Common myeloid progenitor, CD34-positive (primary cell): ENCODE measurements at regions of chr1 and their contacts with region 1.

Region 1: GRCh38 chr1:110495926-110496600 is 22.9 kb downstream of the KCNA10 start:
- DNase-seq: peak; percentile 81 to 90 (median 85)
- H3K4me3 ChIP-seq: no peak overlapping the region
- H3K27ac ChIP-seq: no peak overlapping the region
- H3K4me1 ChIP-seq: peaks cover 3 to 28% (median 23%) of the 10 kb centered on the region in 4 experiments
- H3K27me3 ChIP-seq: no peaks in the 10 kb centered on the region

Region 2: GRCh38 chr1:110384581-110385321 is 111.3 kb before region 1 on chr1:
- CTCF ChIA-PET with region 1: no interaction called
- POLR2A ChIA-PET with region 1: no interaction called
- DNase-seq: peak; percentile 14 to 57 (median 39)
- H3K4me3 ChIP-seq: no peak overlapping the region
- H3K27ac ChIP-seq: peak overlapping the region in 1 of 2 experiments; percentile 47
- H3K4me1 ChIP-seq: peaks cover 14 to 19% (median 15%) of the 10 kb centered on the region in 4 experiments
- H3K27me3 ChIP-seq: no peaks in the 10 kb centered on the region

Region 3: GRCh38 chr1:110407260-110408210 is 88.5 kb before region 1 on chr1 and contains the start of gene LAMTOR5:
- CTCF ChIA-PET with region 1: interaction called, 107 read pairs
- POLR2A ChIA-PET with region 1: interaction called, 3 read pairs
- DNase-seq: peak; percentile 95 to 97 (median 97)
- H3K4me3 ChIP-seq: peak within 1 kb of the TSS; percentile 84 to 98 (median 93)
- H3K27ac ChIP-seq: peak within 1 kb of the TSS; percentile 89 to 94
- H3K4me1 ChIP-seq: peaks cover 12 to 22% (median 14%) of the 10 kb centered on the region in 4 experiments
- H3K27me3 ChIP-seq: no peaks in the 10 kb centered on the region

Region 4: DNA sequence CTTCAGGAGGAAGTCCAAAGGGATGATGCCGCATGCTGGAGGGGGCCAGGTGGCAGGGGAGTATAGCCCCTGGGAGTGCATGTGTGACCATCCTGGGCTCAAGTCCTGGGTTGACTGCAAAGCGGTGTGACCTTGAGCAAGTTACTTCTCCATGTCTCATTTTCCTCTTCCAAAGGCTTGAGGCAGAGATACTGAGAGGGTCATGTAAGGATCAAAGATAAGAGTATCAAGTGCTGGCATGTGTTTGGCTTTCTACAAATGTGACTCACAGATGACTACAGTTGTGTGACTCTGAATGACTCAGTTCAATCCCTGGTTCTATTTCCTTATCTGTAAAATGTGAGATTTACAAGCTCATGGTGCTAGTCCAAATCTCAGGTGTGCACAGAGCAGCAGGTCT is 19.0 kb before region 1 on chr1:
- CTCF ChIA-PET with region 1: interaction called, 68 read pairs
- POLR2A ChIA-PET with region 1: no interaction called
- DNase-seq: peak in 2 of 3 donors; percentile 40 to 51
- H3K4me3 ChIP-seq: no peak overlapping the region
- H3K27ac ChIP-seq: no peak overlapping the region
- H3K4me1 ChIP-seq: peaks cover 0 to under 1% (median 0%) of the 10 kb centered on the region in 4 experiments
- H3K27me3 ChIP-seq: peaks cover 0 to 4% (median 0%) of the 10 kb centered on the region in 5 experiments

Region 5: DNA sequence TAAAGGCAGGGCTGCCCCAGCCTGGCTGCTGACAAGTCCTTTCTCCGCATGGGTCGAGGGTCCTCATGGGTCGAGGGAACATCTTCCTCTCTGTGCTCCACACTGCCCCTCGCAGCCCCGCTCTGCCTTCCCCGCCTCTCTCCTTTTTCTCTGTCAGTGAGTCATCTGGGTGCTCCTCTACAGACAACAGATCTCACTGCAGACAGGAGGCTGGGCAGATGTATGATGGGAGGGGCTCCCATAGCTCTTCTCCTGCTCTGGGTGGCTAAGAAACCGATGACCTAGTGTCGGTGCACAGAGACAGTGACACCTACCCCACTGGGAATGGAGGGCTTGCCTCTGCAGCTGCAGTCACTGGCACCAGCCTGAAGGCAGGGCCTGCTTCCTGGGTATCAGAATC is 17.4 kb after region 1 on chr1:
- CTCF ChIA-PET with region 1: interaction called, 12 read pairs
- POLR2A ChIA-PET with region 1: no interaction called
- DNase-seq: no peak
- H3K4me3 ChIP-seq: no peak overlapping the region
- H3K27ac ChIP-seq: no peak overlapping the region
- H3K4me1 ChIP-seq: no peaks in the 10 kb centered on the region
- H3K27me3 ChIP-seq: no peaks in the 10 kb centered on the region

Region 6: GRCh38 chr1:110746579-110747160 is 250.6 kb after region 1 on chr1:
- CTCF ChIA-PET with region 1: no interaction called
- POLR2A ChIA-PET with region 1: no interaction called
- DNase-seq: peak; percentile 60 to 86 (median 82)
- H3K4me3 ChIP-seq: no peak overlapping the region
- H3K27ac ChIP-seq: no peak overlapping the region
- H3K4me1 ChIP-seq: no peaks in the 10 kb centered on the region
- H3K27me3 ChIP-seq: peaks cover 0 to 38% (median 15%) of the 10 kb centered on the region in 5 experiments